HEK293 (cell line): ENCODE measurements at regions of chr15 and their contacts with region 1.

Region 1: DNA sequence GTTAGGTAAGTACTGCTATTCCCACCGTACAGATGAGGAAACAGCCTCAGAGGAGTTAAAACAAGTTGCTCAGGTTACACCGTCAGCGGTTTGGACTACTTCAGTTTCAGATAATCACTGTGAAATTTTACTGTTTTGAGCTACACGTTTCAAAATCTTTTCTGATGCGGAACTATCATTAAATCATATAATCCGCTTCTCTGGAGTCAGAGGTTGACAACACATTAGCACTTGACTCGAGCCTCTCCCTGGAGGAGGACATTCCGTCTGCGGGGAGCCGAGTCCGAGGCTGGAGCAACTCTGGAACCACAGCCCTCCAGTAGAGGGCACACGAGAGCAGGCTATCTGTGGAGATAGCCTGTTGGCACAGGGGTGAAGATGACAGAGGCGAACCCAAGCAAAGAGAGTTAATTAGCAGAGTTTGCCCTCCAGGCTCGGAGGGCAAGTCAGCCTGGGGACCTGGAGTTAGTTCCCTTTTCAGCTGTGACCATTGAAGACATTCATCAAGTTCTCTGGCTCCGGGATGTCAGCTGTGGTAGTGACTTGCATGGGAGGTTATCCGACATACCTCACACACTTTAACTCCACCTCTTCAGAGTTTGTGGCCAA is 131.2 kb downstream of the IGF1R start:
- H3K4me3 ChIP-seq: no peak overlapping the region
- H3K27ac ChIP-seq: no peak overlapping the region
- H3K4me1 ChIP-seq: peaks cover 24% of the 10 kb centered on the region
- CTCF ChIP-seq: peak; percentile 90

Region 2: DNA sequence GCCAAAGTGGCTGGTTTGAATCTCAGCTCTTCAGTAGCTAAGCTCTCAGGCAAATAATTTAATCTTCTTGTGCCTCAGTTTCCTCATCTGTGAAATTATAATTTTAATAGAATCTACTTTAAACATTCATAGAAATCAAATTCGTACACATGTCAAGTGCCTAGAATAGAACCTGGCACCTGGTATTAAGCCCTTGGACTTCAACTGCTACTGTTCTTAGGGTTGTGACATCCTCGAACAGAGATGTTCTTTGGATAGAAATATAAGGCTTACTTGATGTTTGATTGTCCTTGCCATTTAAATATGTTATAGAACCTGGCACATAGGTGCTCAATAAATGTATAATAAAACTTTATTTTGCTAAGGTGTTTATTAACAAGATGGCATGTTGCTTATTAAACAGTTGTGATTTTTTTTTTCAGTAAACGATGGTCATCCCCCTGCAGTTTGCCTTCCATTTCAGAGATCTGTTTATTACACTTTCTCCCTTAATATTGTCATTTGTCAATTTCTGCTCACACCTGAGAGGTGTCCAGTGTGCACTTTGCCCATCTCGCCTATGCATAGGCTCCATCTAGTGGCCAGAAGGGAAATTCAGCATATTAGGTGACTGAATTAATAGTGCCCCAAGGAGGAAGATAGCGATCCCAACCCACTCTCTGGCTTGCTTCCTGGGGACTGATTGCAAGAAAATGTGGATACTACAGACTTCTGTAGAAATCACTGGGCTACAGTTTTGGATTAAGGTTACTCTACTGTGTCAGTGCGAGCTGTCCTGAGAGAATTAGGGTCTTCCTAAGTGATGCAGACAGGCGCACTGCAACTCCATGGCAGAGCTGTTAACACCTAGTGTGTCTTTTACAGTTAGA is 120.5 kb before region 1 on chr15:
- CTCF ChIA-PET with region 1: interaction called, 19 read pairs
- POLR2A ChIA-PET with region 1: no interaction called
- H3K4me3 ChIP-seq: no peak overlapping the region
- H3K27ac ChIP-seq: no peak overlapping the region
- H3K4me1 ChIP-seq: peaks cover 24% of the 10 kb centered on the region
- CTCF ChIP-seq: peak; percentile 42; the same call in 1 of the 2 replicates

Region 3: GRCh38 chr15:98753726-98754671 is 25.6 kb before region 1 on chr15:
- CTCF ChIA-PET with region 1: interaction called, 10 read pairs
- POLR2A ChIA-PET with region 1: no interaction called
- H3K4me3 ChIP-seq: no peak overlapping the region
- H3K27ac ChIP-seq: no peak overlapping the region
- H3K4me1 ChIP-seq: peaks cover 26% of the 10 kb centered on the region
- CTCF ChIP-seq: no peak

Region 4: DNA sequence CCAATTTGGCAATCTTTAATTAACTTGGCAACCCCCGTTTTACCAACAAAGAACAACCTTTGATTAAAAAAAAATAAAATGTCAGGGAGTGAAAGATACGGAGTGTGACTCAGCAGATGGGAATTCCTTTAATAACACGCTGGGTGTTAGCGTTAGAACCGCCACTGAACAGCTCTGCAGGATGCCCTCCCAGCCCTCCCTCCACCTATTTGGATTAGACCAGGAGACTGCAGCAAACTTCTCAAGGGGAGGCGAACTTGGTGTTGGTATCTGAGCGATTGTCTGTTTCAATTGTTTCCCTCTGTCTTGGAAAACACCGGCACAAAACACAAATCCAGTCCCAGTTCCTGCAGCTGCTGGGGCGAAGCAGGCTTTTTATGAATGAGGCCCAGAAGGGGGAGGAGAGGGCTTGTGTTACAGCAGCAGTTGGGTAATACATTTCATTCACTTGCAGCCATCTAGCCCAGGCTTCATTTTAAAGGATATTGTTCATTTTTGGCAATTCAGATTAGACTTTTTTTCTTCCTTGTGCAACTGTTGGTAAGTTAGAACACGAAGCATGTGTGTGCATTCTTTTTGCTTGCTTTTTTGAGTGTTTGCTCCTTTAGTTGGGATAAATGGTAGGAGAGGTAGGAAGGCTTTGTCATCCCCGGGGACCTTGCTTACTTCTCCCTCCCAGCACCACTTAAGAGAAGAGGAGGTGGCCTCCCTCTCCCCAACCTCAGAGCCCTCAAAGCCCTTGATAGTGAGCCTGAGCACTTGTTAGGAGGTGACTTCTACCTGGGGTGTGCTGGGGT is 21.1 kb after region 1 on chr15:
- CTCF ChIA-PET with region 1: interaction called, 29 read pairs
- POLR2A ChIA-PET with region 1: no interaction called
- H3K4me3 ChIP-seq: peak overlapping the region; percentile 1; the same call in 1 of the 2 replicates
- H3K27ac ChIP-seq: peak overlapping the region; percentile 75
- H3K4me1 ChIP-seq: peaks cover 42% of the 10 kb centered on the region
- CTCF ChIP-seq: no peak

Region 5: DNA sequence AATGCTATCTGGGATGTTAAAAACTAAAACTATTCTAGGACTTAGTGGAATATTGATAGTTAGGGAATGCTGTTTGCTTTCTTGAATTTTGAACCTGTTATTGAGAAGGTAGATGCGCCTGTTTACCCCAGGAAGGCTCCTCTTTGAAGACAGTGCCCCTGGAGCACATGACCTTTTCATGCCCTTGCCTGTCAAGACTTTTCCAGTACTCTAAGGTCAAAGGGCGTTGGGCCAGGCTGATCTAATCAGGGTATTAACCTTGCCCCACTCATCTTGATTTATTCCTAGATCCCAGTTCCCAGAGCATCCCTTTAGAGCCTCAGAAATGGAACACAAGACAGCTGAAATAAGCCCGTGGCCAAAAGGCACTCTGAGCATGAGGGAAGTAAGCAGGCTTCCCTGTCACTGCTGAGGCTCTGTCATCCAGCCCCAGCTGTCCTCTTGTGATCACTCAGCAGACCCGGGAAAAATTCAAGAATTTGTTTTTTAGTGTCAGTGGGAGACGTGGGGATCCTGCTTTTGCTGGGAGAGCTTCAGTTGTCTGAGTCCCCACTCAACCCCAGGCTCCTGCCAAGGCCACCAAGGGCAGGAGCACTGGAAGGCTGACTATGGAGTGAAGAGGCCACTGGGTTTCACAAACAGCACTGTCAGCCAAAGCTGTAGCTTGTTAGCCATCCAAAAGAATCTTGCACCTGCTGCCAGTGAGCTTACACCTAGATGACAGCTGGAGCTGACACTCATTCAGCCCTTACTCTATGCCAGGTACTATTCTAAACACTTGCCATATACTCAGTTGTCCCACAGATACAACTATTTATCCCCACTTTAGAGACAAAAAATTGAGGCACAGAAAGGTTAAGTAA is 59.1 kb after region 1 on chr15:
- CTCF ChIA-PET with region 1: interaction called, 13 read pairs
- POLR2A ChIA-PET with region 1: no interaction called
- H3K4me3 ChIP-seq: no peak overlapping the region
- H3K27ac ChIP-seq: no peak overlapping the region
- H3K4me1 ChIP-seq: peaks cover 20% of the 10 kb centered on the region
- CTCF ChIP-seq: no peak